ENCODE measurements at regions of chr4 and their contacts with region 1.

Region 1: DNA sequence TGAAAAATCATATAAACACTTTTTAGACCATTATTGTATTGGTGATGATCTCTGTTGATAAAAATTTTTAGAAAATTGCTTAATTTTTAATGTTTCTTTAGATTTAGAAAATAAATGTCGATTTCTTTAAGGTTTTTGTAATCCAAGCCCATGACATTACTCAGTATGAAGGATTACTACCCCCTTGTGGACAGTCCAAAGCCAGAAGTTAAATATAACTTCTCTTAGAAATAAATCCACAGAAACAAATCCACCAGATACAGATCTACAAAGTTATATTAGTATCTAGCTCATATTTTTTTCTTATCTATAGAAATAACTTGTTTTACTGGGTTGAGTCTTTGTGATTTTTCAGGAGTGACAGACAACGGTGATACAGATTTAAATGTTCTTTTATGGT is 18.9 kb downstream of the TIFA start:
- DNase-seq: no peak
- H3K4me3 Mint-ChIP-seq: no peak overlapping the region
- H3K27ac Mint-ChIP-seq: no peak overlapping the region
- H3K4me1 Mint-ChIP-seq: no peaks in the 10 kb centered on the region
- H3K27me3 Mint-ChIP-seq: no peaks in the 10 kb centered on the region
- CTCF ChIP-seq: no peak

Region 2: DNA sequence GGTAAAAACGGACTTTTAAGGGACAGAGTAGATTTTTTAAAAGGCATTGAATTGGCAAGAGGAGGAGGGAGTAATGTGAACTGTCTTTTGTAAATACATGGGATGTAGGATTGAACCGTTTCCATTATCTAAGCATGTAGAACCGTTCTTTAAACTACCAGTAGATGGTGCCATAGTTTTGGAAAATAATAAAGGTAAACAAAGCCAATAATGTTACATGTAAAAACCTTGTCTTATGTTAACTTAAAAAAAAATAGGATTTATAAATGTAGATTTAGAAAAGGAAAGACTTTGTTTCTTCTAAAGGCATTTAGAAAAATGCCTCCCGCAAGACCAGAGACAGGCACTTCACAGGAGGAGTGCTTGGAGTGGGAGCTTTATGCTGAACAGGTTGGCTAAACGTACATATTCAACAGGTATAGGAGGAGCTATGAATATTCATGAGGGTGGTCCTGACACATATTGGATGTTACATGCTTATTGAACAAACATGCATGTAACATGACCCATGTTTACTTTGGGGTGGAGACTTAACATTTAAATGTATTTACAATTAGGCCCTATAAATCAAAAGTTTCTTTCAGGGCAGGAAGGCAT is 167.0 kb before region 1 on chr4:
- CTCF ChIA-PET with region 1: no interaction called
- intact Hi-C with region 1: loop called (anchors 10 kb)
- DNase-seq: no peak
- H3K4me3 Mint-ChIP-seq: no peak overlapping the region
- H3K27ac Mint-ChIP-seq: no peak overlapping the region
- H3K4me1 Mint-ChIP-seq: peaks cover 12% of the 10 kb centered on the region
- H3K27me3 Mint-ChIP-seq: no peaks in the 10 kb centered on the region
- CTCF ChIP-seq: no peak

Region 3: GRCh38 chr4:112532267-112532666 is 265.4 kb after region 1 on chr4:
- CTCF ChIA-PET with region 1: no interaction called
- intact Hi-C with region 1: no loop called
- DNase-seq: no peak
- H3K4me3 Mint-ChIP-seq: no peak overlapping the region
- H3K27ac Mint-ChIP-seq: no peak overlapping the region
- H3K4me1 Mint-ChIP-seq: no peaks in the 10 kb centered on the region
- H3K27me3 Mint-ChIP-seq: no peaks in the 10 kb centered on the region
- CTCF ChIP-seq: no peak

Measured in Calu3 (cell line).